ENCODE measurements at regions of chr2 and their contacts with region 1.

Region 1: GRCh38 chr2:174603280-174603679 is 5.7 kb upstream of the WIPF1 start:
- DNase-seq: peak; percentile 64
- H3K4me3 Mint-ChIP-seq: no peak overlapping the region
- H3K27ac Mint-ChIP-seq: peak overlapping the region; percentile 56
- H3K4me1 Mint-ChIP-seq: peaks cover 90% of the 10 kb centered on the region
- H3K27me3 Mint-ChIP-seq: no peaks in the 10 kb centered on the region

Region 2: DNA sequence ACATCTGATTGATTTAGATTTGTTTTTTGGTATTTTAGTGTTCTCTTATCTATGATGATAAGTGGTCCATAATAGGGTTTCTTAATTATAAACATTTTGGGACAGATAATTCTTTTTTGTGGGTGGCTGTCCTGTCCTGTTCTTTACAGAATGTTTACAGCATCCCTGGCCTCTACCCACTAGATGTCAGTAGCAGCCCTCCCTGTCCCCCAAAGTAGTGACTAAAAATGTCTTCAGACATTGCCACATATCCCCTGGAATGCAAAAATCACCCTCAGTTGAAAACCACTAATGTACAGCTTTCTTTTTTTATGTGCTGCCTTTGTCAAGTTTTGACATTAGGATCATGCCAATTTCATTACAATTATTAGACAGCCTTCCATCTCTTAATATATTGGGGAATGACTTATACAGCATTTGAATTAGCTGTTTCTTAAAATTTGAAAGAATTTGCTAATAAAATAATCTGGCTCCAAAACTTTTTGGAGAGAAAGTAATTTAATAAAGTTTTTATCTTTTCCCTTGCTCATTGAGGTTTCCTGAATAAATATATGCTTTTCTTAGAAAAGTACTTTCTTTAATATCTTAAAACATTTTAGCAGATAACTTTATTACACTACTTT is 25.2 kb before region 1 on chr2:
- CTCF ChIA-PET with region 1: interaction called, 17 read pairs
- POLR2A ChIA-PET with region 1: interaction called, 204 read pairs
- DNase-seq: peak; percentile 57
- H3K4me3 Mint-ChIP-seq: no peak overlapping the region
- H3K27ac Mint-ChIP-seq: no peak overlapping the region
- H3K4me1 Mint-ChIP-seq: peaks cover 78% of the 10 kb centered on the region
- H3K27me3 Mint-ChIP-seq: no peaks in the 10 kb centered on the region

Region 3: DNA sequence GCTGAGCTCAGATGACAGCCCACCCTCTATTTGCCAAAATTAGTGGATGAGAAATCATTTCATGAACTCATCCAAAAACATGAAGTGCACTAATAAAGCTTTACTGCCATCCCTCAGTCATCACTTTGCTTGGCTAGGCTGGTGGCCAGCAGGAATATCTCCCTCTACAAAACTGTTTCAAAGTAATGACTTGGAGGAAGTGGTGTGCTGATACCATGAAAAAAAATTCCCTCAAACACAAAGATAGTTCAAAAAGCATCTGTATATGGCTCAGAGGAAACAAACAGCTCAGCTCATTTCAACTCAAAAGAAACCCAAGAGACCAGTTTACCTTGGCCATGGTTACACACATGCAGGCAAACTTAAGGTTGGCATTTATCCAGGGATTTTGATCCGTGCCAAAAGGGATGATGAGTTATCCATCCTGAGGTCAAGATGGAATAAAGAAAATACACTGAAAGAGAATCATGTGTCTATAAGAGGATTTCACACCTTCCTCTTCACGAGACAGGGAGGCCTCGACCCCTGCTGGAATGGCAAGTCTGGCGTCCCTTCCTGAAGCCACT is 12.7 kb after region 1 on chr2:
- CTCF ChIA-PET with region 1: interaction called, 13 read pairs
- POLR2A ChIA-PET with region 1: interaction called, 444 read pairs
- DNase-seq: no peak
- H3K4me3 Mint-ChIP-seq: peak overlapping the region; percentile 25
- H3K27ac Mint-ChIP-seq: peak overlapping the region; percentile 90
- H3K4me1 Mint-ChIP-seq: peaks cover 90% of the 10 kb centered on the region
- H3K27me3 Mint-ChIP-seq: no peaks in the 10 kb centered on the region

Region 4: GRCh38 chr2:174682578-174683391 is 79.5 kb after region 1 on chr2:
- CTCF ChIA-PET with region 1: interaction called, 162 read pairs
- POLR2A ChIA-PET with region 1: interaction called, 117 read pairs
- DNase-seq: peak; percentile 64
- H3K4me3 Mint-ChIP-seq: peak overlapping the region; percentile 84
- H3K27ac Mint-ChIP-seq: peak overlapping the region; percentile 76
- H3K4me1 Mint-ChIP-seq: peaks cover 62% of the 10 kb centered on the region
- H3K27me3 Mint-ChIP-seq: no peaks in the 10 kb centered on the region